ENCODE measurements at regions of chr1 and their contacts with region 1.

Region 1: GRCh38 chr1:15246960-15247614 is at the start of gene FHAD1:
- DNase-seq: peak in 1 of 9 donors; percentile 52
- ATAC-seq: peak; percentile 64
- H3K4me3 ChIP-seq: no peak within 1 kb of the TSS
- H3K4me3 Mint-ChIP-seq: peak within 1 kb of the TSS in 9 of 10 donors; percentile 45 to 80 (median 72)
- H3K27ac ChIP-seq: no peak within 1 kb of the TSS
- H3K27ac Mint-ChIP-seq: peak within 1 kb of the TSS in 6 of 9 donors; percentile 3 to 80 (median 52)
- H3K4me1 ChIP-seq: peaks cover 12 to 28% of the 10 kb centered on the region in 2 donors
- H3K4me1 Mint-ChIP-seq: peaks cover 13 to 46% (median 31%) of the 10 kb centered on the region in 7 donors
- H3K27me3 ChIP-seq: peaks cover 0 to 3% of the 10 kb centered on the region in 2 donors
- H3K27me3 Mint-ChIP-seq: peaks cover 39 to 78% (median 46%) of the 10 kb centered on the region in 5 donors
- total RNA-seq, gene FHAD1: 0.19 to 1.1 TPM in 2 of 5 experiments, not detected in the others

Region 2: GRCh38 chr1:14894811-14895560 is 352.1 kb before region 1 on chr1:
- CTCF ChIA-PET with region 1: no interaction called
- POLR2A ChIA-PET with region 1: no interaction called
- intact Hi-C with region 1: no loop called
- DNase-seq: no peak
- ATAC-seq: no peak
- H3K4me3 ChIP-seq: no peak overlapping the region
- H3K4me3 Mint-ChIP-seq: no peak overlapping the region
- H3K27ac ChIP-seq: no peak overlapping the region
- H3K27ac Mint-ChIP-seq: no peak overlapping the region
- H3K4me1 ChIP-seq: no peaks in the 10 kb centered on the region
- H3K4me1 Mint-ChIP-seq: no peaks in the 10 kb centered on the region
- H3K27me3 ChIP-seq: no peaks in the 10 kb centered on the region
- H3K27me3 Mint-ChIP-seq: peaks cover 0 to 22% (median 12%) of the 10 kb centered on the region in 5 donors

Region 3: DNA sequence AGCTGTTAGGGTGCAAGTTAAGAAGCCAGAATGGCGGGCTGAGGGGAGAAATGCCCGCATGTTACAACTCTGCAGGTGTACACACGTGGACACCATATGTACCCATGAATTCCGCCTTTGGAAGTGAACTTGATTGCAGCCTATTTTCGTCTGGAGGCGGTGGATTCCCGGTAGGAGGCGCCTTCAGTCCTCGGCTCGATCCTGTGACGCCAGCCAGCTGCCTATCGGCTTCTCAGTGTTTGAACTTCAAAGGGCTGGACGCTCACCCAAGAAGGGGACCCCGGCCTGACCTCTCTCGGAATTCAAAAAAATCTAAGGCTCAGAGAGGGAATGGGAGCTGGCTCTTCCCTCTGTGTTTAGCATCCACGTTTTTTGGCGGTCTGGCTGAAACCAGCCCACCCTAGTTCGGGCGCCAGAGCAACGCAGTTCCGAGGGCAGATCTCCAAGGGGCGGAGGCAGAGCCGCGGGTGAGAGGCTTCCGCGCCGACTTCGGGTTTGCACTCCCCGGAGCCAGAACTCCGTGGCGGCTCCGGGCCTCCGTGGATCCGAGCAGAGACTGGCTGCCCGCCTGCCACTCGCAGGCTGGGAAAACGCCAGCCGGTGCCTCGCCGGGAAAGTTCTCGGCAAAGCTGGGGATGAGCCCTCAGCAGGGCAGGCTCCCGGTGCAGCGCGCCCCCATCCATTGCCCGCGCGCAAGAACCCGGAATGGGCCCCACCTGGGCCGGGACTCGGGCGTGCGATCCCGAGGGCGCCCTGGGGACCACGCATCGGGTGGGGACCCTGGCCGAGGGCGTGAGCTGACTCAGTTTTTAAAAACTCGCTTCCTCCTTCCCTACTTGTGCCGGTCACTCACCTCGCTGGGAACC is 94.5 kb before region 1 on chr1:
- CTCF ChIA-PET with region 1: no interaction called
- POLR2A ChIA-PET with region 1: no interaction called
- intact Hi-C with region 1: loop called in 1 of 2 experiments (anchors 1 kb)
- DNase-seq: no peak
- ATAC-seq: peak; percentile 5
- H3K4me3 ChIP-seq: no peak overlapping the region
- H3K4me3 Mint-ChIP-seq: peak overlapping the region in 8 of 10 donors; percentile 47 to 73 (median 62)
- H3K27ac ChIP-seq: no peak overlapping the region
- H3K27ac Mint-ChIP-seq: peak overlapping the region in 1 of 9 donors; percentile 18
- H3K4me1 ChIP-seq: peaks cover 4 to 8% of the 10 kb centered on the region in 2 donors
- H3K4me1 Mint-ChIP-seq: peaks cover 8 to 41% (median 27%) of the 10 kb centered on the region in 7 donors
- H3K27me3 ChIP-seq: peaks cover 0 to 5% of the 10 kb centered on the region in 2 donors
- H3K27me3 Mint-ChIP-seq: peaks cover 48 to 72% (median 55%) of the 10 kb centered on the region in 5 donors

Region 4: DNA sequence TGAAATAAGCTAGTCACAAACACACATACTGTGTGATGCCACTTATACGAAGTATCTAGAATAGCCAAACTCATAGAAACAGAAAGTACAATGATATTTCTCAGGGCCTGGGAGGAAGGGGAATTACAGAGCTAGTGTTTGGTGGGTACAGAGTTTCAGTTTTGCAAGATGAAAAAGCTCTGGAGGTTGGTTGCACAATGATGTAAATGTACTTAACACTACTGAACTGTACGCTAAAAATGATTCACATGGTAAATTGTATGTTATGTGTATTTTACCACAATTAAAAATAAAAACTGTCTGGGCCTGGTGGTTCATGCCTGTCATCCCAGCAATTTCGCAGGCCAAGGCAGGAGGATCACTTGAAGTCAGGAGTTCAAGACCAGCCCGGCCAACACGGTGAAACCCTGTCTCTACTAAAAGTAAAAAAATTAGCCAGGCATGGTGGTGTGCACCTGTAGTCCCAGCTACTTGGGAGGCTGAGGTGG is 15.3 kb before region 1 on chr1:
- CTCF ChIA-PET with region 1: no interaction called
- POLR2A ChIA-PET with region 1: no interaction called
- intact Hi-C with region 1: loop called in 1 of 2 experiments (anchors 1 kb)
- DNase-seq: no peak
- ATAC-seq: peak; percentile 73
- H3K4me3 ChIP-seq: no peak overlapping the region
- H3K4me3 Mint-ChIP-seq: peak overlapping the region in 1 of 10 donors; percentile 7
- H3K27ac ChIP-seq: no peak overlapping the region
- H3K27ac Mint-ChIP-seq: no peak overlapping the region
- H3K4me1 ChIP-seq: no peaks in the 10 kb centered on the region
- H3K4me1 Mint-ChIP-seq: peaks cover 0 to 19% (median 9%) of the 10 kb centered on the region in 7 donors
- H3K27me3 ChIP-seq: no peaks in the 10 kb centered on the region
- H3K27me3 Mint-ChIP-seq: peaks cover 0 to 42% (median 0%) of the 10 kb centered on the region in 5 donors

Region 5: GRCh38 chr1:15288173-15288926 is 41.3 kb after region 1 on chr1:
- CTCF ChIA-PET with region 1: no interaction called
- POLR2A ChIA-PET with region 1: no interaction called
- intact Hi-C with region 1: no loop called
- DNase-seq: no peak
- ATAC-seq: no peak
- H3K4me3 ChIP-seq: no peak overlapping the region
- H3K4me3 Mint-ChIP-seq: no peak overlapping the region
- H3K27ac ChIP-seq: no peak overlapping the region
- H3K27ac Mint-ChIP-seq: no peak overlapping the region
- H3K4me1 ChIP-seq: no peaks in the 10 kb centered on the region
- H3K4me1 Mint-ChIP-seq: peaks cover 0 to 3% (median 0%) of the 10 kb centered on the region in 7 donors
- H3K27me3 ChIP-seq: no peaks in the 10 kb centered on the region
- H3K27me3 Mint-ChIP-seq: peaks cover 0 to 25% (median 10%) of the 10 kb centered on the region in 5 donors

Measured in naive thymus-derived CD4-positive, alpha-beta T cell (primary cell).